WTC11 (cell line): ENCODE measurements at regions of chrX and their contacts with region 1.

Region 1: DNA sequence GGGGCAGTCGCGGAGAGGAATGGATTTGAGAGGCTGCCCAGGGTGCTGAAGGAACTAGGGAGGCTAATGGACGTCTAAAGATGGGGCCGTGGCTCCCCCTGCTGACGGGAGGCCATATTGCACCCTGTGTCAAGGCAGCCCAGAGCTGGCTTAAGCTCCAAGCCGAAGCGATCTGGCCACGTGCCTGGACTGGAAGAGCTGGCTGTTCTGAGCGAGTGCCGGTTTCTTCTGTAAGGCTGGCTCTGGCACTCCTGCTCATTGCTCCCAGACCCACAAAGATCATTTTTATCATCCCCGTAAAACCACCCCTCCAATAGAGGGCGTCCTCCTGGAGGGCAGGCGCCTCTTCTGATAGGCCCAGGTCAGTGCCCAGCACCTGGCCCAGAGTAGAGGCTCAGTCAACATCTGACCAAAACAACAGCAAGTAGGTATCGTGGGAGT is 5.6 kb downstream of the PNCK start:
- DNase-seq: peak; percentile 84
- ATAC-seq: peak; percentile 78
- H3K4me3 Mint-ChIP-seq: peak overlapping the region; percentile 54
- H3K27ac Mint-ChIP-seq: no peak overlapping the region; the same call in 1 of the 2 replicates
- H3K4me1 Mint-ChIP-seq: peaks cover 3% of the 10 kb centered on the region; the same call in 1 of the 2 replicates
- H3K27me3 Mint-ChIP-seq: peaks cover 28% of the 10 kb centered on the region
- CTCF ChIP-seq: peak; percentile 71

Region 2: DNA sequence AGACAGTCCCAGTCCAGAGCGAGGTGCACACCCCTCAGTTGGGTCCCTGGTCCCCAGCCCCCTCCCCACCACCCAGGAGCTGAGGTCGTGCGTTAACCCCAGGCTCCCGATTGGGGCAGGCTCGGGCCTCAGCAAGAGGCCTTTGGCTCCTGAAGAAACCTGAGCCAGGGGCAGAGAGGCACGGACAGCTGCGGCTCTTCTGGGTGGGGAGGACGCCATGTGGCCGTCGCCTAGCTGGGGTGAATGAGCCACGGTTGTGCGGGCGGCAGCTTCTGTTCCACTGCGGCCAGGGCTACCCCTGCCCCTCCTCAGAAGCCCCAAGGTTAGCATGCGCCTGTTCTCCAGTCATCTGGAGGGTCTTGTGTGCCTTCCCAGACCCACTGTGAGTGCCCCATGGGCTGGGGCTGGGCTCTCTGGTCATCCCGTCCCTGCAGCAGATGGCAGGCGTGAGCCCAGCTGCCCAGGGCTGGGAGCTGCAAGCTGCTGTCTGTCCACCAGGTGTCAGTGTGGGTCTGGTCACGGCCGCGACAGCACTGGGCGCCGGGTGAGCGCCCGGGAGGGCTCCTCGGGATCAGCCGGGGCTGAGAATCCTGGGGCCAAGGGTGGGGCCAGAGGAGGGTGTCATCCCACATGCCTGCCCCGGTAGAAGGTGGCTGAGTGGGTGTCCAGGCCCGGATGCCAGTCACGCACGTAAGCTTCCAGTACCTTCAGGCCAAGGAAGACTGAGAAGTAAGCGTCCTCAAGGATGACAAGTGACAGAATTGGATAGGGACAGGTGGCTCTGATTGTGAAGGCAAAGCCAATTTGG is 128.6 kb before region 1 on chrX:
- CTCF ChIA-PET with region 1: interaction called, 48 read pairs
- POLR2A ChIA-PET with region 1: no interaction called
- DNase-seq: peak; percentile 76
- ATAC-seq: peak; percentile 93
- H3K4me3 Mint-ChIP-seq: no peak overlapping the region
- H3K27ac Mint-ChIP-seq: no peak overlapping the region
- H3K4me1 Mint-ChIP-seq: no peaks in the 10 kb centered on the region
- H3K27me3 Mint-ChIP-seq: no peaks in the 10 kb centered on the region
- CTCF ChIP-seq: no peak; the same call in 1 of the 2 replicates

Region 3: GRCh38 chrX:153564051-153564736 is 103.8 kb before region 1 on chrX:
- CTCF ChIA-PET with region 1: interaction called, 22 read pairs
- POLR2A ChIA-PET with region 1: no interaction called
- DNase-seq: no peak
- ATAC-seq: no peak
- H3K4me3 Mint-ChIP-seq: no peak overlapping the region
- H3K27ac Mint-ChIP-seq: no peak overlapping the region
- H3K4me1 Mint-ChIP-seq: peaks cover 8% of the 10 kb centered on the region
- H3K27me3 Mint-ChIP-seq: no peaks in the 10 kb centered on the region; the same call in 1 of the 2 replicates
- CTCF ChIP-seq: no peak

Region 4: GRCh38 chrX:153582896-153583295 is 85.1 kb before region 1 on chrX:
- CTCF ChIA-PET with region 1: interaction called, 22 read pairs
- POLR2A ChIA-PET with region 1: no interaction called
- DNase-seq: no peak
- ATAC-seq: no peak
- H3K4me3 Mint-ChIP-seq: no peak overlapping the region
- H3K27ac Mint-ChIP-seq: no peak overlapping the region
- H3K4me1 Mint-ChIP-seq: peaks cover 14% of the 10 kb centered on the region
- H3K27me3 Mint-ChIP-seq: no peaks in the 10 kb centered on the region; the same call in 1 of the 2 replicates
- CTCF ChIP-seq: no peak

Region 5: DNA sequence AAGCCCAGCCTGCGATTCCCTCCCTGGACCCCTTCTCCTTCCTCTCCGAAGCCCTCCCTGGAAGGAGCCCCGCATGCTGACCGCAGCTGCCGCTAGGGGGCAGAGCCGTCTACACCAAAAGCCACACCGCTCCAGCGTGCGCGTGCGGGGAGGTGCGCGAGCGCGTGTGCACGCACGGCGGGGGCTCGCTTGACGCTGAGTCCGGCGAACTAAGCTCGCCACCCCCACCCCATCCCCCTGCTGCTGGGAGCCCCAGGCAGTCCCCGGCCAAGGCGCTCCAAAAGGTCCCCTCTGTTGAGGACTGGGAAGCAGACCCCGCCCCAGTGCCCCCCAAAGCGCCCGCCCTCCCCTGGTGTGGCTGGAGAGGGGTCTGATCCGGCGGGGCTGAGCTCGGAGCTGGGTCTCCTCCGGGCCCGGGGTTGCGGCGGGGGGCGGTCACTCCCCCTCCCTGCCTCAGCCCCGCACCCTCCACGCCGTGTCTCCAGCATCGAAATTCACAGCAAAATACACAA is 58.0 kb before region 1 on chrX:
- CTCF ChIA-PET with region 1: interaction called, 58 read pairs
- POLR2A ChIA-PET with region 1: no interaction called
- DNase-seq: peak; percentile 87
- ATAC-seq: peak; percentile 94
- H3K4me3 Mint-ChIP-seq: peak overlapping the region; percentile 64
- H3K27ac Mint-ChIP-seq: no peak overlapping the region
- H3K4me1 Mint-ChIP-seq: no peaks in the 10 kb centered on the region
- H3K27me3 Mint-ChIP-seq: peaks cover 52% of the 10 kb centered on the region
- CTCF ChIP-seq: peak; percentile 59

Region 6: DNA sequence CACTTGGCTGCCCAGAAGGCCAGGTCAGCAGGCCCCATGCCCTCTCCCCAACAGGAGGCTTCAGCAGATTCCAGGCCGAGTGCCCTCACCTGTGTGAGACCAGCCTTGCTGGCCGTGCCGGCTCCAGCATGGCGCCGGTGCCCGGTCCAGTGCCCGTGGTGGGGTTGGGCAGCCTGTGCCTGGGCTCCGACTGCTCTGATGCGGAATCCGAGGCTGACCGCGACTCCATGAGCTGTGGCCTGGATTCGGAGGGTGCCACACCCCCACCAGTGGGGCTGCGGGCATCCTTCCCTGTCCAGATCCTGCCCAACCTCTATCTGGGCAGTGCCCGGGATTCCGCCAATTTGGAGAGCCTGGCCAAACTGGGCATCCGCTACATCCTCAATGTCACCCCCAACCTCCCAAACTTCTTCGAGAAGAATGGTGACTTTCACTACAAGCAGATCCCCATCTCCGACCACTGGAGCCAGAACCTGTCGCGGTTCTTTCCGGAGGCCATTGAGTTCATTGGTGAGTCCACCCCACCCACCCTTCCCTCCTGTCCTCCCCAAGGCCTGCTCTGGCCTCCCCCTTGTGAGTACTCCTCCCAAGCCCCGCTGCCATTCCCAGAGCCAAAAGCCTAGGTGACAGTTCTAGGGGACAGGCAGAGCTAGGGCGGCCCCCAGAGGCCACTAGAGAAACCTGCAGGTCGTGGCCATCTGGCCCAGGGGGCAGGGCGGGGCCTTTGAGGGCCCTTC is 18.6 kb before region 1 on chrX:
- CTCF ChIA-PET with region 1: interaction called, 153 read pairs
- POLR2A ChIA-PET with region 1: interaction called, 3 read pairs
- DNase-seq: peak; percentile 73
- ATAC-seq: peak; percentile 73
- H3K4me3 Mint-ChIP-seq: no peak overlapping the region
- H3K27ac Mint-ChIP-seq: no peak overlapping the region
- H3K4me1 Mint-ChIP-seq: no peaks in the 10 kb centered on the region
- H3K27me3 Mint-ChIP-seq: peaks cover 50% of the 10 kb centered on the region
- CTCF ChIP-seq: no peak

Region 7: GRCh38 chrX:153687121-153688039 is 19.4 kb after region 1 on chrX and contains the start of gene SLC6A8:
- CTCF ChIA-PET with region 1: interaction called, 143 read pairs
- POLR2A ChIA-PET with region 1: interaction called, 7 read pairs
- DNase-seq: peak; percentile 65
- ATAC-seq: peak; percentile 38
- H3K4me3 Mint-ChIP-seq: peak within 1 kb of the TSS; percentile 61
- H3K27ac Mint-ChIP-seq: peak within 1 kb of the TSS; percentile 85
- H3K4me1 Mint-ChIP-seq: peaks cover 18% of the 10 kb centered on the region
- H3K27me3 Mint-ChIP-seq: no peaks in the 10 kb centered on the region; the same call in 1 of the 2 replicates
- CTCF ChIP-seq: peak; percentile 31; the same call in 1 of the 2 replicates
- total RNA-seq, gene SLC6A8: 102 to 112 TPM (median 110 TPM) in 3 replicates

Region 8: DNA sequence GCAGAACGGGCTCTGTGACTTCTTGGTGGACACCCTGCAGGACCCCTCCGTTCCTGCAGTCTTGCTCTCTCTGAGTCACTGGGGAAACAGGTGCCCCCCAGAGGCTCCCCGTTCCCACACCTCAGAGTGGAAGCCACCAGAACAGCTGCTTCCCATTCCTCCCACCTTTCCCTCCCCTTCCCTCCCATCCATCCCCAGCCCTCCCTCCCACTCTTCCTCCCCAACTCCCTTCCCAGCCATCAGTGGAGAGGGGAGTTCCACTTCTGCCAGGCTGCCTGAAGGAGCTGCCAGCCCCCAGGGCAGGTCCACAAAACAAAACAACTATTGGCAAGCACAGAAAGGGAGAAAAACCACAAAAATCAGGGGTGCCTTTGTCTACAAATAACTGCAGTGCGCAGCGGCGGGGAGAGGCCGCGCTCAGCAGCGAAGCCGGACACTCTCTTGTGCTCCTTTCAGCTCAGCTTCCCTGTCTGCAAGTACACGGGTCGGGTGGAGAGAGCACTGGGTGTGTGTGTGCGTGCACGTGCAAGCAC is 134.6 kb after region 1 on chrX:
- CTCF ChIA-PET with region 1: no interaction called
- POLR2A ChIA-PET with region 1: no interaction called
- DNase-seq: no peak
- ATAC-seq: no peak
- H3K4me3 Mint-ChIP-seq: no peak overlapping the region
- H3K27ac Mint-ChIP-seq: peak overlapping the region; percentile 89
- H3K4me1 Mint-ChIP-seq: no peaks in the 10 kb centered on the region
- H3K27me3 Mint-ChIP-seq: no peaks in the 10 kb centered on the region
- CTCF ChIP-seq: no peak

Region 9: DNA sequence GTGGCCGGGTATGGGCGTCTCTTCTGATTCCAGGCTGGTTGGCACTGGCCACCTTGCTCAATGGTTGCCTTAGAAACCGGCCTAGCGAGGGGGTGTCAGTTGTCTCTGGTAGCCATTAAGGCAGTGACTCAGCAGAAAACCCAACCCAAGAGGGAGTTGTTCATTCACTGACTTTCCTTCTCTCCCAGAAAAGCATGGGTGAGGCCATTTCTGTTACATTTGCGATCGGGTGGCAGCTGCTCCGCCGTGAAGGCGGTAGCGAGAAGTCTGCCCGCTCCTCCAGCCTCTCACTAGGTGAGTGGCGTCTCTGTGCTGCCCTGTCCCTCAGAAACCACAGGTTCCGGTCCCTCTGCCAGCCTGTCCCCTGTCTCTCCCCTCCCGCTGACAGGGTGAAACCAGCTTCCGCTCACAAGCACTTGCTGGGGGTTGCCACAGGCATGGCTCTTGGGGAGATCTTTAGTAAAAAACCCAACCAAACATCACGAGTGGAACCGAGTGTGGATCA is 334.3 kb after region 1 on chrX:
- CTCF ChIA-PET with region 1: no interaction called
- POLR2A ChIA-PET with region 1: no interaction called
- DNase-seq: no peak
- ATAC-seq: peak; percentile 39; the same call in 1 of the 2 replicates
- H3K4me3 Mint-ChIP-seq: no peak overlapping the region
- H3K27ac Mint-ChIP-seq: no peak overlapping the region
- H3K4me1 Mint-ChIP-seq: peaks cover 10% of the 10 kb centered on the region
- H3K27me3 Mint-ChIP-seq: no peaks in the 10 kb centered on the region
- CTCF ChIP-seq: no peak